GM12878 (cell line): ENCODE measurements at regions of chr2 and their contacts with region 1.

Region 1: GRCh38 chr2:174682578-174683391 is 81.5 kb downstream of the CHRNA1 start:
- DNase-seq: no peak
- ATAC-seq: peak; percentile 66
- H3K4me3 ChIP-seq: peak overlapping the region; percentile 79
- H3K27ac ChIP-seq: no peak overlapping the region
- H3K4me1 ChIP-seq: peaks cover 4% of the 10 kb centered on the region; the same call in 1 of the 2 replicates
- H3K27me3 ChIP-seq: peaks cover 0 to 2% of the 10 kb centered on the region in 2 experiments; a peak in 2 of 4 replicates
- CTCF ChIP-seq: no peak
- EP300 ChIP-seq: no peak
- POLR2A ChIP-seq: no peak
- RAD21 ChIP-seq: no peak

Region 2: DNA sequence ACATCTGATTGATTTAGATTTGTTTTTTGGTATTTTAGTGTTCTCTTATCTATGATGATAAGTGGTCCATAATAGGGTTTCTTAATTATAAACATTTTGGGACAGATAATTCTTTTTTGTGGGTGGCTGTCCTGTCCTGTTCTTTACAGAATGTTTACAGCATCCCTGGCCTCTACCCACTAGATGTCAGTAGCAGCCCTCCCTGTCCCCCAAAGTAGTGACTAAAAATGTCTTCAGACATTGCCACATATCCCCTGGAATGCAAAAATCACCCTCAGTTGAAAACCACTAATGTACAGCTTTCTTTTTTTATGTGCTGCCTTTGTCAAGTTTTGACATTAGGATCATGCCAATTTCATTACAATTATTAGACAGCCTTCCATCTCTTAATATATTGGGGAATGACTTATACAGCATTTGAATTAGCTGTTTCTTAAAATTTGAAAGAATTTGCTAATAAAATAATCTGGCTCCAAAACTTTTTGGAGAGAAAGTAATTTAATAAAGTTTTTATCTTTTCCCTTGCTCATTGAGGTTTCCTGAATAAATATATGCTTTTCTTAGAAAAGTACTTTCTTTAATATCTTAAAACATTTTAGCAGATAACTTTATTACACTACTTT is 104.7 kb before region 1 on chr2:
- CTCF ChIA-PET with region 1: interaction called, 149 read pairs
- POLR2A ChIA-PET with region 1: no interaction called
- RAD21 ChIA-PET with region 1: interaction called, 66 read pairs
- SMC1A ChIA-PET with region 1: interaction called, 150 read pairs
- in situ Hi-C with region 1: loop called (anchors 25 kb)
- intact Hi-C with region 1: no loop called
- DNase-seq: no peak
- ATAC-seq: peak; percentile 71
- H3K4me3 ChIP-seq: no peak overlapping the region
- H3K27ac ChIP-seq: no peak overlapping the region
- H3K4me1 ChIP-seq: peaks cover 7% of the 10 kb centered on the region
- H3K27me3 ChIP-seq: no peaks in the 10 kb centered on the region
- CTCF ChIP-seq: peak; percentile 60 to 77 (median 64); a peak in 5 of 6 replicates
- EP300 ChIP-seq: no peak
- POLR2A ChIP-seq: no peak
- RAD21 ChIP-seq: peak; percentile 88

Region 3: DNA sequence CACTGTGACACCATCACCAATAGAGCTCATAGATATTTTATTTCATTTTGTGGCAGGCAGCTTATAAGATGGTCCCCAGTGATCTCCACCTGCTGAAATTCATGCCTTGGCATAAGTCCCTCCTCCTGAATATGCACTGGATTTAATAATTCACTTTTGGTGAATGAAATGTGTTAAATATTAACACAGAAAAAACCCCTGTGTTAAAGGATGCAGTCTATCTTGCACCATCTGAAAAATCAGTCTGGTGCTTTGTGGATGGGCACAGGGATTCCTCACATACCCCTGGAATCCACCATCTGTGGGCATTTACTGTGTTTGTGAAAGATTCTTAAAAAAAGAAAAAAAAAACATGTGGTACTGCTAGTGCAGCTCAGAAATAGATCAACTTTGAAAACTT is 59.1 kb before region 1 on chr2:
- CTCF ChIA-PET with region 1: interaction called, 534 read pairs
- POLR2A ChIA-PET with region 1: interaction called, 7 read pairs
- RAD21 ChIA-PET with region 1: interaction called, 19 read pairs
- SMC1A ChIA-PET with region 1: interaction called, 8 read pairs
- in situ Hi-C with region 1: no loop called
- intact Hi-C with region 1: no loop called
- DNase-seq: no peak
- ATAC-seq: peak; percentile 61
- H3K4me3 ChIP-seq: no peak overlapping the region
- H3K27ac ChIP-seq: no peak overlapping the region
- H3K4me1 ChIP-seq: no peaks in the 10 kb centered on the region; the same call in 1 of the 2 replicates
- H3K27me3 ChIP-seq: no peaks in the 10 kb centered on the region
- CTCF ChIP-seq: no peak
- EP300 ChIP-seq: no peak
- POLR2A ChIP-seq: no peak
- RAD21 ChIP-seq: no peak

Region 4: DNA sequence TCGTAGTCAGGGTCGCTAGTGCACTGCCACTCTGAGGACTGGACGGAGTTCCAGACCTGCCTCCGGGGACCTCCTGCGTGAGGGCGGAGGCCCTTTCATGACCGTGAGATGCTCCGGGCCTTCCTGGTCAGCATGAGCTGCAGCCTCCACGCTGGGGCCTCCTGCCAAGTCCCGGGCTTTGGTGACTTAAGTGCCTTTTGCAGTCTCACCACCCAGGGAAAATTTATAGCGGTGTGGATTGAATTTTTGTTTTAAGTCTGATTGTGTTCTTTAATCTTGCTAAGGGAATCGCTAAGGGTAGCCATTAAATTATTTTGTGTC is 47.9 kb after region 1 on chr2:
- CTCF ChIA-PET with region 1: no interaction called
- POLR2A ChIA-PET with region 1: no interaction called
- RAD21 ChIA-PET with region 1: no interaction called
- SMC1A ChIA-PET with region 1: no interaction called
- in situ Hi-C with region 1: no loop called
- intact Hi-C with region 1: no loop called
- DNase-seq: no peak
- ATAC-seq: no peak
- H3K4me3 ChIP-seq: no peak overlapping the region
- H3K27ac ChIP-seq: no peak overlapping the region
- H3K4me1 ChIP-seq: no peaks in the 10 kb centered on the region
- H3K27me3 ChIP-seq: peaks cover 9 to 12% of the 10 kb centered on the region in 2 experiments
- CTCF ChIP-seq: no peak
- EP300 ChIP-seq: no peak
- POLR2A ChIP-seq: no peak
- RAD21 ChIP-seq: no peak

Region 5: DNA sequence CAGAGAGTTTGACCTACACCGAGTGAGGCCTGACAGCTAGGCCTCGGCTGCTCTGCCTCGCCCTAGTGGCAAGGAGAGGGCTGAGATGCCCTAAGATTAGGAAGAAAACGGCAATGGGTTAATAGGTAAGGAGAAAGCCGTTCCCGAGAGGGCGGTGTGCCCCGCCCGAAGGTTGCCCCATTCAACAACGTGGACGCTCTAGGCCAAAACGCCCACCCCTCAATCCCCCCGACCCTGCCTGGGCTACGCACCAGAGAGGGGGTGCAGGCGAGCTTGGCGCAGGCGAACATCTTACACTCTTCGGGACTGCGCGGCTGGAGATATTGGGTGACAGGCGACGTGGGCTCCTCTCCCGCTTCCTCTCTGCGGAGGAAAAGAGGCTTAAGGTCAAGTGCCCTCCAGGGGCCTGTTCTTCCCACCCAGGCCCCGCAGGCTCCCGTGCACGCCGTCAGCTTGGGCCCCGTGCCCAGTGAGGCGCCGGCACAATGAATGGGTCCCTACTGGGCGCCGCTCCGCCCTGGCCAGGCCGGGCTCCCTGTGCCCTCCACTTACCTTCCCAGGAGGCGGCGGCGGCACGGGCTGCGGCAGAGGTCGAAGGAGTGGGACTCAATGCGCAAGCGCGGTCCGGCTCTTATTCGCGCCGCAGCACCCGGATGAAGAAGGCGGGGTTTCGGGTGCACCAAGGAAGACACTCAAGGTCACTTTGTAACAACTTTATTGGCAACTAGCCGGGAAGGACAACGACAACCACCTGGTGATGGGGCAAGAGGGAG is 498.5 kb after region 1 on chr2 and contains the start of gene ATP5MC3:
- CTCF ChIA-PET with region 1: no interaction called
- POLR2A ChIA-PET with region 1: no interaction called
- RAD21 ChIA-PET with region 1: no interaction called
- SMC1A ChIA-PET with region 1: no interaction called
- in situ Hi-C with region 1: no loop called
- intact Hi-C with region 1: no loop called
- DNase-seq: peak; percentile 91
- ATAC-seq: peak; percentile 93
- H3K4me3 ChIP-seq: peak within 1 kb of the TSS; percentile 83
- H3K27ac ChIP-seq: peak within 1 kb of the TSS; percentile 69
- H3K4me1 ChIP-seq: no peaks in the 10 kb centered on the region
- H3K27me3 ChIP-seq: no peaks in the 10 kb centered on the region
- CTCF ChIP-seq: peak in 2 of 3 experiments; percentile 23 to 25; a peak in 2 of 6 replicates
- EP300 ChIP-seq: no peak
- POLR2A ChIP-seq: peak; percentile 94
- RAD21 ChIP-seq: no peak
- polyA plus RNA-seq, gene ATP5MC3: 643 to 716 TPM